ENCODE measurements at regions of chr2 and their contacts with region 1.

Region 1: GRCh38 chr2:42216712-42217111 is 47.6 kb downstream of the EML4 start:
- DNase-seq: no peak
- H3K4me3 ChIP-seq: no peak overlapping the region
- CTCF ChIP-seq: no peak

Region 2: DNA sequence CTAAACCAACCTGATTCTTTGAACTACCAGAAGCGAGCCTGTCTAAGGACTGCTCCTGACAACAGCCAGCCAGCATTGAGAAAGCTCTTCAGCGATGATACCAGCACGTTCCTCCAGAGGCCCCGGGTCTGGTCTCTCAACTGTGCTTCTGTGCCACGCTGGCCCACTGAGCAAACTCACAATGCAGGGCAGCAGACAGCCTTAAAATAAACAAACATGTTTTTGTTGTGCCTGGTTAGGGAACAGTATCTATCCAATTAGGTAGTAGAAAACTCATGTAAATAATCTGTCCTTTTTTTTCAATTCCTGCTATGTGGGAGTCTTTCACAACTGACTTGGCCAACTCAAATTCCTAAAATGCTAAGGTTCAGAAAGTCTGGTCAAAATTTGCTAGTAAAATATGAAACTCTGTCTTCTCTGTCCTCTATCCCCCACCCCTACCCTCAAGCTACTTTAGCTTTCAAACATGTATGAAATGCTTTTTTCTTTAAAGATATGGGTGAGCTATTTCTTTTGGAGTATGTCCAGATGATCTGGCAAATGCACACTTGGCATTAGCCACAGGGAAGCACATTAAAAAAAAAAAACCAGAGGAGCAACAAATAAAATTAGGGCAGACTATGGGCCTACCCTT is 69.0 kb before region 1 on chr2:
- in situ Hi-C with region 1: loop called (anchors 5 kb)
- DNase-seq: peak; percentile 32
- H3K4me3 ChIP-seq: no peak overlapping the region
- CTCF ChIP-seq: no peak